Right cardiac atrium (tissue), 5 donors: ENCODE measurements at regions of chr11 and their contacts with region 1.

Region 1: GRCh38 chr11:118401151-118401878 is at the start of gene ATP5MG:
- DNase-seq: peak; percentile 94 to 97 (median 96)
- ATAC-seq: peak; percentile 90 to 91
- H3K4me3 ChIP-seq: peak within 1 kb of the TSS; percentile 80
- H3K27ac ChIP-seq: peak within 1 kb of the TSS; percentile 90
- H3K4me1 ChIP-seq: peaks cover 2% of the 10 kb centered on the region
- H3K27me3 ChIP-seq: no peaks in the 10 kb centered on the region
- total RNA-seq, gene ATP5MG: 500 to 709 (median 601) TPM

Region 2: GRCh38 chr11:118435893-118436624 is 34.7 kb after region 1 on chr11 and contains the start of gene KMT2A:
- intact Hi-C with region 1: loop called in 1 of 4 experiments (anchors 5 kb)
- DNase-seq: peak; percentile 98 to 100 (median 99)
- ATAC-seq: peak; percentile 92 to 95
- H3K4me3 ChIP-seq: peak within 1 kb of the TSS; percentile 84
- H3K27ac ChIP-seq: peak within 1 kb of the TSS; percentile 84
- H3K4me1 ChIP-seq: no peaks in the 10 kb centered on the region
- H3K27me3 ChIP-seq: no peaks in the 10 kb centered on the region
- total RNA-seq, gene KMT2A: 26.9 to 32.7 (median 27.7) TPM

Region 3: DNA sequence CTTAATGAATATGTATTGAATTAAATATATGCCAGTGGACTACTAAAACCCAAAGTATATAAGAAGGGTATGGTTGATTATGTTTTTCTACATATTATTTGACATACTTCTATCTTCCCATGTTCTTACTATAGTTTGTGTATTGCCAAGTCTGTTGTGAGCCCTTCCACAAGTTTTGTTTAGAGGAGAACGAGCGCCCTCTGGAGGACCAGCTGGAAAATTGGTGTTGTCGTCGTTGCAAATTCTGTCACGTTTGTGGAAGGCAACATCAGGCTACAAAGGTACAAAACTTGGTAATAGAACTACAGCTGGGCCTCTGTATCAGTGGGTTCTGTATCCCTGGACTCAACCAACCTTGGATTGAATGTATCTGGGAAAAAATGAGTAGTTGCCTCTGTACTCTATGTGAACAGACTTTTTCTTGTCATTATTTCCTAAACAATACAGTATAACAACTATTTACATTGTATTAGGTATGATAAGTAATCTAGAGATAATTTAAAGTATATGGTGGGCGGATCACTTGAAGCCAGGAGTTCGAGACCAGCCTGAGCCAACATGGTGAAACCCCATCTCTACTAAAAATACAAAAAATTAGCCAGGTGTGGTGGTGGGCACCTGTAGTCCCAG is 87.3 kb after region 1 on chr11:
- intact Hi-C with region 1: loop called in 2 of 4 experiments (anchors 5 kb)
- DNase-seq: peak; percentile 58 to 77 (median 65)
- ATAC-seq: peak; percentile 59 to 64
- H3K4me3 ChIP-seq: no peak overlapping the region
- H3K27ac ChIP-seq: no peak overlapping the region
- H3K4me1 ChIP-seq: no peaks in the 10 kb centered on the region
- H3K27me3 ChIP-seq: no peaks in the 10 kb centered on the region